ENCODE measurements at regions of chr3 and their contacts with region 1.

Region 1: DNA sequence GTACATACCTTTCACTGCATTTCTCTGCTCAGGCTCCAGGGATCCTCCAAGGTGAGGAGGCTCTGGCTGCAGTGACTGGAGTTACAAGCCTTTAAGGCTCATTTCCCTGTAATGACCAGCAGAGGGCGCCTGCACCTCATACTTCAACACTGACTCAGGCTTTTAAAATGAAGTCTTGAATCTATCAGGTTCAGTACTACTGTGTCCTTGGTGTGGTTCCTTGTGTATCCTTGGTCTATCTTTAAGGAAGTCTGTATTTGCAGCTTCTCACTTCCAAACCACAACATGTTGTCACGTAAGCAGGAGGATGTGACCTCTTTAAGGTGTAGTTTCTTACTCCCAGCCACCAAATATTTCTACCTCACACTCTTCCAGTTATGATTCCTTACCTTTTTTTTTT is 122.5 kb upstream of the ZBED2 start:
- DNase-seq: peak; percentile 75
- H3K4me3 ChIP-seq: no peak overlapping the region
- H3K27ac ChIP-seq: peak overlapping the region in 1 of 4 donors; percentile 24
- H3K4me1 ChIP-seq: peaks cover 0 to 3% (median 0%) of the 10 kb centered on the region in 4 donors
- H3K27me3 ChIP-seq: no peaks in the 10 kb centered on the region
- CTCF ChIP-seq: peak; percentile 87 to 98 (median 94)
- EP300 ChIP-seq: no peak
- POLR2A ChIP-seq: no peak

Region 2: GRCh38 chr3:111967651-111968274 is 250.2 kb after region 1 on chr3:
- in situ Hi-C with region 1: loop called (anchors 5 to 10 kb)
- intact Hi-C with region 1: loop called (anchors 2 kb)
- DNase-seq: peak; percentile 85
- H3K4me3 ChIP-seq: no peak overlapping the region
- H3K27ac ChIP-seq: peak overlapping the region; percentile 16 to 55 (median 30)
- H3K4me1 ChIP-seq: peaks cover 0 to 8% (median 2%) of the 10 kb centered on the region in 4 donors
- H3K27me3 ChIP-seq: no peaks in the 10 kb centered on the region
- CTCF ChIP-seq: peak; percentile 87 to 94 (median 92)
- EP300 ChIP-seq: no peak
- POLR2A ChIP-seq: no peak

Region 3: GRCh38 chr3:111978493-111979433 is 261.2 kb after region 1 on chr3 and contains the start of gene ABHD10:
- in situ Hi-C with region 1: loop called in 3 of 4 experiments (anchors 5 to 10 kb)
- intact Hi-C with region 1: no loop called
- DNase-seq: peak; percentile 97
- H3K4me3 ChIP-seq: peak within 1 kb of the TSS; percentile 69 to 90 (median 79)
- H3K27ac ChIP-seq: peak within 1 kb of the TSS; percentile 89 to 93 (median 92)
- H3K4me1 ChIP-seq: peaks cover 0 to 32% (median 15%) of the 10 kb centered on the region in 4 donors
- H3K27me3 ChIP-seq: no peaks in the 10 kb centered on the region
- CTCF ChIP-seq: no peak
- EP300 ChIP-seq: no peak
- POLR2A ChIP-seq: peak; percentile 91
- total RNA-seq, gene ABHD10: 2.2 to 23.3 (median 9.3) TPM

Measured in transverse colon (tissue), 4 donors.